ENCODE measurements at regions of chr9 and their contacts with region 1.

Region 1: DNA sequence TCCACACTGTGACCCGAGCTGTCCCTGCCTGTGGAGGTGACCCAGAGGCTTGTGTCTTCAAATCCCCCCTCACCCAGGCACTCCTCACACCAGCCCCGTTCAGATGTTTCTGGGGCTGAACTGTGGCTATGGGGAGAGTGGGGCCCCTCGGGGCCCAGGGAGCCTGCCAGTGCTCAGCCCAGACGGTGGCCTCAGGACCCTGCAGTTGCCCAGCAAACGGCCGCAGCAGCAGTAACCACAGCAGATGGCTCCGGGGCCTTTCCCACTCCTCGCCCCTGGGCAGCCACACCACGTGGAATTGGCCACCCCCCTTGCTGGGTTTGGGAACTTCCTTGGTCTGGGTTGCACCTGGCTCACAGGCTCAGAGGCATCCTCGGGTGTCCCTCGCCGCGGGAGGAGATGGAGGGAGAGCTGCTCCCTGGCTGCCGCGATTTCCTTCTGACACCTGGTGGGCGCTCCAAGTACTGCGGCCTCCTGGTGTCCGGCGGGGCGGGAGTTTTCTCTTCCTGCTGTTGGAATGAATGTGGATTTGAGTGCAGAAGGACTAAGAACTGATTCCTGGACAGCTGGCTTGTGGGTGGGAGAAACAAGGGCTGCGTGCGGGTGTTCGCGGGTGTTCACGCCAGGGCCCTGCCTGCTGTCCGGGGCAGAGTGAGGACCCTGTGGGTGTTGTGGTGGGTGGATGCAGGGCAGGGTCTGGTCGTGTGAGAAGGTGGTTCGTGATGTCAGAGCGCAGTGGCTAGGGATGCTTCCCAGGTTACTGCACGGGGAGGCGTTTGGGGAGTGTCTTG is 97.5 kb downstream of the COL5A1 start:
- DNase-seq: peak; percentile 67 to 87
- H3K4me3 ChIP-seq: no peak overlapping the region
- H3K27ac ChIP-seq: peak overlapping the region in 2 of 5 donors; percentile 48 to 64
- H3K4me1 ChIP-seq: peaks cover 6 to 40% (median 23%) of the 10 kb centered on the region in 4 donors
- H3K27me3 ChIP-seq: peaks cover 0 to 13% (median 0%) of the 10 kb centered on the region in 3 donors
- CTCF ChIP-seq: peak in 6 of 7 experiments; percentile 30 to 92 (median 82)
- EP300 ChIP-seq: no peak
- POLR2A ChIP-seq: no peak

Region 2: DNA sequence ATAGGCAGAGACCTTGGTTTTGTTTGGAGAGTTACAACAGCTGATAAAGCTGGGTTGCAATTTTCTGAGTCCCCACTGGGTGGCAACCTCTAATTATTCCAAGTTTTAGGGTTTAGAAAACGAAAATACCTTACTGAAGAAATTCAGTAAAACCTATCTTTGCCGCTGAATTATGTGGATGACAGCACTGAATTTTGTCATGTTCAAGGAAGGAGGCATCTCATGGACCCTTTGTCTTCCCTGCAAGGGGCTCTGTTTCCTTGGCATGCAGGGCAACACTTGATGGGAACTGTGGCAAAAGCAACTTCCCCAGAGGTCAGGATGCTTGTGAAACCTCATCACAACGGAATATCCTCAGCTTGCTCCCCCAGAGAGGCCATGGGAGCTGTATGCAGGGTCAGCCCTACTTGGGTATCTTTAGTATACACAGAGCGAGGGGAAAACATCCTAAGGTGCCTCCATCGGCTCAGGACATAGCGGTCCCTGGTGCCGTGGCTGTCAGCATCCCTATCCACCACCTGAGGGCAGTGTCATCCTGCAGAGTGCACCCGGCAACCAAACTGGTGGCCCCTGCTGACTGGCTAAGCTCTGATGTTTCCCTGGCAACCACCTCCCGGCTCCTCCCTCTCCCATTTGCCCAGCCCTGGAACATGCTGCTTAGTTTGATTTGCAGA is 289.7 kb before region 1 on chr9:
- intact Hi-C with region 1: loop called (anchors 5 kb)
- DNase-seq: peak; percentile 90 to 97
- H3K4me3 ChIP-seq: no peak overlapping the region
- H3K27ac ChIP-seq: no peak overlapping the region
- H3K4me1 ChIP-seq: peaks cover 0 to under 1% (median 0%) of the 10 kb centered on the region in 4 donors
- H3K27me3 ChIP-seq: no peaks in the 10 kb centered on the region
- CTCF ChIP-seq: peak in 5 of 7 experiments; percentile 81 to 90 (median 86)
- EP300 ChIP-seq: no peak
- POLR2A ChIP-seq: no peak

Region 3: GRCh38 chr9:134698587-134699342 is 40.3 kb before region 1 on chr9:
- intact Hi-C with region 1: loop called (anchors 5 kb)
- DNase-seq: peak; percentile 63 to 86
- H3K4me3 ChIP-seq: no peak overlapping the region
- H3K27ac ChIP-seq: peak overlapping the region in 2 of 5 donors; percentile 30 to 52
- H3K4me1 ChIP-seq: peaks cover 7 to 31% (median 17%) of the 10 kb centered on the region in 4 donors
- H3K27me3 ChIP-seq: peaks cover 0 to 5% (median 0%) of the 10 kb centered on the region in 3 donors
- CTCF ChIP-seq: peak in 5 of 7 experiments; percentile 52 to 89 (median 84)
- EP300 ChIP-seq: no peak
- POLR2A ChIP-seq: no peak

Region 4: GRCh38 chr9:134800791-134801339 is 61.8 kb after region 1 on chr9:
- intact Hi-C with region 1: no loop called
- DNase-seq: no peak
- H3K4me3 ChIP-seq: no peak overlapping the region
- H3K27ac ChIP-seq: no peak overlapping the region
- H3K4me1 ChIP-seq: no peaks in the 10 kb centered on the region
- H3K27me3 ChIP-seq: no peaks in the 10 kb centered on the region
- CTCF ChIP-seq: no peak
- EP300 ChIP-seq: no peak
- POLR2A ChIP-seq: no peak